ENCODE measurements at regions of chr4 and their contacts with region 1.

Region 1: DNA sequence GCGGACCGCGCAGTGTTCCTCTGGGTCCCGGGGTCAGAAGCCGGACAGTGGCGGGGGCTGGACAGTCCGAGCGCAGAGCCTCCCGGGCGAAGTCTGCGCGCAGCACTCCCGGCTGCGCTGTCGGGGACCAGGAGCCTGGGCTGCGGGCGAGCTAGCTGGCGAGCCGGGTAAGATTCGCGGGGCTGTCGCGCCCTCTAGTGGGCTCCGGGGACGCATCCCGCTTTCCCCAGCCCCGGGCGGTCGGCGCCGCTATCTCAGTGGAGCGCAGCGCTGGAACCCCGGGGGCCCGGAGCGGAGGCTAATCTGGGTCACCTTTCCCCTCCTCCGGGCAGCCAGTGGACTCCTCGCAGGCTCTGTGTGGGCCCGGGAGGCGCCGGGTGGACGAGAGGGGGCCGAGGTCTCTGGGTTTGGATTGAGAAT is 4.2 kb downstream of the PDGFRA start:
- DNase-seq: peak; percentile 83
- ATAC-seq: peak; percentile 71
- H3K4me3 ChIP-seq: peak overlapping the region in 4 of 5 experiments; percentile 34 to 70 (median 48)
- H3K4me3 Mint-ChIP-seq: peak overlapping the region; percentile 86
- H3K27ac ChIP-seq: no peak overlapping the region
- H3K27ac Mint-ChIP-seq: no peak overlapping the region
- H3K4me1 ChIP-seq: peaks cover 47 to 50% of the 10 kb centered on the region in 2 donors
- H3K4me1 Mint-ChIP-seq: peaks cover 35% of the 10 kb centered on the region
- H3K27me3 ChIP-seq: peaks cover 0 to 62% (median 43%) of the 10 kb centered on the region in 4 experiments
- H3K27me3 Mint-ChIP-seq: peaks cover 61% of the 10 kb centered on the region
- CTCF ChIP-seq: peak; percentile 77

Region 2: GRCh38 chr4:53196882-53197771 is 1036.2 kb before region 1 on chr4:
- CTCF ChIA-PET with region 1: interaction called, 35 read pairs
- POLR2A ChIA-PET with region 1: no interaction called
- intact Hi-C with region 1: loop called (anchors 1 kb)
- DNase-seq: peak; percentile 72
- ATAC-seq: no peak
- H3K4me3 ChIP-seq: no peak overlapping the region
- H3K4me3 Mint-ChIP-seq: no peak overlapping the region
- H3K27ac ChIP-seq: no peak overlapping the region
- H3K27ac Mint-ChIP-seq: no peak overlapping the region
- H3K4me1 ChIP-seq: peaks cover 0 to under 1% of the 10 kb centered on the region in 2 donors
- H3K4me1 Mint-ChIP-seq: peaks cover under 1% of the 10 kb centered on the region
- H3K27me3 ChIP-seq: no peaks in the 10 kb centered on the region
- H3K27me3 Mint-ChIP-seq: no peaks in the 10 kb centered on the region
- CTCF ChIP-seq: peak; percentile 88

Region 3: GRCh38 chr4:53702334-53703266 is 530.7 kb before region 1 on chr4:
- CTCF ChIA-PET with region 1: interaction called, 16 read pairs
- POLR2A ChIA-PET with region 1: no interaction called
- intact Hi-C with region 1: loop called (anchors 5 kb)
- DNase-seq: peak; percentile 54
- ATAC-seq: peak; percentile 81
- H3K4me3 ChIP-seq: peak overlapping the region in 4 of 5 experiments; percentile 7 to 50 (median 41)
- H3K4me3 Mint-ChIP-seq: peak overlapping the region; percentile 71
- H3K27ac ChIP-seq: peak overlapping the region; percentile 42 to 58
- H3K27ac Mint-ChIP-seq: peak overlapping the region; percentile 93
- H3K4me1 ChIP-seq: peaks cover 43 to 48% of the 10 kb centered on the region in 2 donors
- H3K4me1 Mint-ChIP-seq: peaks cover 57% of the 10 kb centered on the region
- H3K27me3 ChIP-seq: no peaks in the 10 kb centered on the region
- H3K27me3 Mint-ChIP-seq: no peaks in the 10 kb centered on the region
- CTCF ChIP-seq: no peak

Region 4: DNA sequence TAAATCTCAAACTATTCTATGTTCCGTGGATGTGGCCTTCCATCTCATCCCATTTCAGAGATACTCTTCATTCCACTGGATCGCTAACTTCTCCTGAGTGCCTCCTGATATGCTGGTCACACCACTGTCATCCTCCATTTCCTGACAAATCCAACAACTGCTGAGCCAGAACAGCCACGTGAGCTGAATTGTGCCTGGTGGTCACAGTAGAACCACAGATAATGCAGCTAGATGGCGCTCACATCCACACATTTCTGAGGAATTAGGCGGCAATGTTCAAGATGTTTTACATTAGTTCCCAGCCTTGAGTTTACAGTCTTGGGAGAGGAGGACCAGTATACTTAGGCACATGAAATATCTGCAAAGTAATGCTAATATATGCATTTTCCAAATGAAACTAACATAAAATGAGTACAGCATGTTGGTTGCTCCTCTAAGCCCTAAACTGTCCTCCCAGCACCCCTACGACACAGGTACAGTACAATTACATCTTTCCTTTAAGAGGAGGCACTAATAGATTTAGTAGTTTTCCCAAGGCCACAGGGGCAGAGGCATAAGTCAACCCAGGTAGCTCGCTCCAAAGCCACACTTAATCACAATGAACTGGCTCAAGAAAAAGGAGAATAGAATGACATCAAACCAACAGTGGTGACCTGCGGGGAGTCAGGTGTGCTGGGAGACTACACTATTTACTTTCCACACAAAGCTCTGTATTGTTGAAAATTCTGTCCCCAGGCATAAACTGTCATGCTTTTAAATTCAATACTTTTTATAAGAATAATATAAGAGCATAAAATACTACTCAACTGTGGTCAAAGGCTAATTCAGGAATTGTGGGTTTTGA is 303.1 kb before region 1 on chr4:
- CTCF ChIA-PET with region 1: interaction called, 96 read pairs
- POLR2A ChIA-PET with region 1: no interaction called
- intact Hi-C with region 1: loop called (anchors 1 kb)
- DNase-seq: peak; percentile 60
- ATAC-seq: no peak
- H3K4me3 ChIP-seq: no peak overlapping the region
- H3K4me3 Mint-ChIP-seq: no peak overlapping the region
- H3K27ac ChIP-seq: no peak overlapping the region
- H3K27ac Mint-ChIP-seq: no peak overlapping the region
- H3K4me1 ChIP-seq: no peaks in the 10 kb centered on the region
- H3K4me1 Mint-ChIP-seq: no peaks in the 10 kb centered on the region
- H3K27me3 ChIP-seq: peaks cover 0 to 9% (median 3%) of the 10 kb centered on the region in 4 experiments
- H3K27me3 Mint-ChIP-seq: peaks cover 22% of the 10 kb centered on the region
- CTCF ChIP-seq: peak; percentile 64

Region 5: GRCh38 chr4:54217642-54218495 is 15.4 kb before region 1 on chr4:
- CTCF ChIA-PET with region 1: interaction called, 58 read pairs
- POLR2A ChIA-PET with region 1: no interaction called
- intact Hi-C with region 1: no loop called
- DNase-seq: peak; percentile 75
- ATAC-seq: peak; percentile 67
- H3K4me3 ChIP-seq: peak overlapping the region in 1 of 5 experiments; percentile 38
- H3K4me3 Mint-ChIP-seq: peak overlapping the region; percentile 24
- H3K27ac ChIP-seq: no peak overlapping the region
- H3K27ac Mint-ChIP-seq: no peak overlapping the region
- H3K4me1 ChIP-seq: peaks cover 7 to 8% of the 10 kb centered on the region in 2 donors
- H3K4me1 Mint-ChIP-seq: peaks cover 6% of the 10 kb centered on the region
- H3K27me3 ChIP-seq: peaks cover 0 to 18% (median 15%) of the 10 kb centered on the region in 4 experiments
- H3K27me3 Mint-ChIP-seq: peaks cover 37% of the 10 kb centered on the region
- CTCF ChIP-seq: peak; percentile 93

Measured in B cell (primary cell).